ENCODE measurements at regions of chr2 and their contacts with region 1.

Region 1: GRCh38 chr2:232611551-232612218 is 21.7 kb upstream of the EFHD1 start:
- DNase-seq: peak; percentile 61
- ATAC-seq: peak; percentile 90
- H3K4me3 ChIP-seq: no peak overlapping the region
- H3K27ac ChIP-seq: no peak overlapping the region
- H3K4me1 ChIP-seq: no peaks in the 10 kb centered on the region; the same call in 1 of the 2 replicates
- H3K27me3 ChIP-seq: 0 out of 5 replicates have a peak, but pooled peaks cover 0 to 5% of the 10 kb centered on the region in 2 experiments
- CTCF ChIP-seq: peak; percentile 93
- EP300 ChIP-seq: no peak
- POLR2A ChIP-seq: no peak
- RAD21 ChIP-seq: peak; percentile 73

Region 2: GRCh38 chr2:232250246-232251175 is 361.2 kb before region 1 on chr2:
- CTCF ChIA-PET with region 1: no interaction called
- POLR2A ChIA-PET with region 1: no interaction called
- in situ Hi-C with region 1: no loop called
- intact Hi-C with region 1: no loop called
- DNase-seq: no peak
- ATAC-seq: no peak
- H3K4me3 ChIP-seq: no peak overlapping the region
- H3K27ac ChIP-seq: no peak overlapping the region
- H3K4me1 ChIP-seq: no peaks in the 10 kb centered on the region
- H3K27me3 ChIP-seq: no peaks in the 10 kb centered on the region
- CTCF ChIP-seq: no peak
- EP300 ChIP-seq: no peak
- POLR2A ChIP-seq: no peak
- RAD21 ChIP-seq: no peak

Region 3: DNA sequence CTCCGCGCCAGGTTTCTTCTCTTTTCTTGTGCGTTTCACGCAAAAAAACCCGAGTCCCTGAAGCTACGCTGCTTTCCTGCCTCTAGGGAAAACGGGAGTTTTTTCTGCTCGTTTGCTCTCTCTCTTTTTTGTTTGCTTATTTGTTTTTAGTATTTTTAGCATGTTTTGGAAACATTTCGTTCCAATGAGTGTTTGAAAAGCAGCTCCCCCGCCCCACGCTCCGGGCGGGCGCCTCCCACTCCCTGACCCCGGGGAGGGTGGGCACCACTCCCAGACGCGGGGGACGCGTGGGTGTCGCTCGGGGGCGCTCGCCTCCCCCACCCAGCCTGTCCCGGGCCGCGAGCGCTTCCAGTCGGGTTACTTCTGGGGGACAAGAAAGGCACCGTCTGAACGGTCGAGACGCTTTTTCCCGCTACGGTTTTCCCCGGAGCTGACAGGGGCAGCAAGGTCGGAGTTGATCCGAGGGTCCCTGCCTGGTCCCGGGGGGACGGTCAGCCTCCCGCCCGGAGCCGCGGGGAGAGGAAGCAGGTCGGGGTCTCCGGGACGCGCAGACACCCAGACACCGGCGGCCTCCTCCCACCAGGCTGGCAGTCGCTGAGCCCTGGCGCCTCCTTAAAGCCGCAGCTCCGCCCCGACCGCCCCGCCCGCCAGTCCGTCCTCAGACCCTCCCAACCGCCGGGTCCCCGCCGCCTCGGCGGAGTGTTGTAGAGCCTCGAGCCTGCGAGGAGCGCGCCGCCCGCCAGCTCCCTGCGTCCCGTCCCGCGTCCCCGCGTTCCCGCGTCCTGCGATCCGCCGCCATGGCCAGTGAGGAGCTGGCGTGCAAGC is 21.4 kb after region 1 on chr2 and contains the start of gene EFHD1:
- CTCF ChIA-PET with region 1: no interaction called
- POLR2A ChIA-PET with region 1: no interaction called
- in situ Hi-C with region 1: no loop called
- intact Hi-C with region 1: no loop called
- DNase-seq: no peak
- ATAC-seq: peak; percentile 72
- H3K4me3 ChIP-seq: peak within 1 kb of the TSS; percentile 48 to 70 (median 62)
- H3K27ac ChIP-seq: no peak within 1 kb of the TSS
- H3K4me1 ChIP-seq: peaks cover 27% of the 10 kb centered on the region
- H3K27me3 ChIP-seq: peaks cover 15 to 55% of the 10 kb centered on the region in 2 experiments
- CTCF ChIP-seq: peak; percentile 31
- EP300 ChIP-seq: no peak
- POLR2A ChIP-seq: no peak
- RAD21 ChIP-seq: no peak
- total RNA-seq, gene EFHD1: 0.09 and 0.17 TPM in 2 replicates

Region 4: GRCh38 chr2:232668805-232669444 is 57.2 kb after region 1 on chr2:
- CTCF ChIA-PET with region 1: interaction called, 55 read pairs
- POLR2A ChIA-PET with region 1: no interaction called
- in situ Hi-C with region 1: loop called (anchors 5 kb)
- intact Hi-C with region 1: loop called (anchors 1 kb)
- DNase-seq: peak; percentile 38
- ATAC-seq: peak; percentile 85
- H3K4me3 ChIP-seq: 0 out of 6 replicates have a peak overlapping the region, but pooled peaks of 1 of the 3 experiments have one; percentile 8
- H3K27ac ChIP-seq: no peak overlapping the region
- H3K4me1 ChIP-seq: no peaks in the 10 kb centered on the region
- H3K27me3 ChIP-seq: no peaks in the 10 kb centered on the region
- CTCF ChIP-seq: peak; percentile 88
- EP300 ChIP-seq: no peak
- POLR2A ChIP-seq: no peak
- RAD21 ChIP-seq: peak; percentile 67

Region 5: GRCh38 chr2:232697100-232697865 is 85.6 kb after region 1 on chr2 and contains the start of gene GIGYF2:
- CTCF ChIA-PET with region 1: no interaction called
- POLR2A ChIA-PET with region 1: no interaction called
- in situ Hi-C with region 1: no loop called
- intact Hi-C with region 1: loop called (anchors 1 kb)
- DNase-seq: peak; percentile 96
- ATAC-seq: peak; percentile 93
- H3K4me3 ChIP-seq: peak within 1 kb of the TSS; percentile 92 to 97 (median 97)
- H3K27ac ChIP-seq: peak within 1 kb of the TSS; percentile 87
- H3K4me1 ChIP-seq: peaks cover 47% of the 10 kb centered on the region
- H3K27me3 ChIP-seq: no peaks in the 10 kb centered on the region; a peak in 1 of 5 replicates
- CTCF ChIP-seq: peak; percentile 35
- EP300 ChIP-seq: no peak; a peak in 1 of 4 replicates
- POLR2A ChIP-seq: peak; percentile 93
- RAD21 ChIP-seq: peak; percentile 70
- total RNA-seq, gene GIGYF2: 73.5 and 83.4 TPM in 2 replicates

Region 6: GRCh38 chr2:232731470-232731869 is 119.8 kb after region 1 on chr2:
- CTCF ChIA-PET with region 1: no interaction called
- POLR2A ChIA-PET with region 1: no interaction called
- in situ Hi-C with region 1: no loop called
- intact Hi-C with region 1: no loop called
- DNase-seq: no peak
- ATAC-seq: no peak
- H3K4me3 ChIP-seq: no peak overlapping the region
- H3K27ac ChIP-seq: no peak overlapping the region
- H3K4me1 ChIP-seq: no peaks in the 10 kb centered on the region
- H3K27me3 ChIP-seq: no peaks in the 10 kb centered on the region
- CTCF ChIP-seq: no peak
- EP300 ChIP-seq: no peak
- POLR2A ChIP-seq: no peak
- RAD21 ChIP-seq: no peak

Measured in HepG2 (cell line).